ENCODE measurements at regions of chr15 and their contacts with region 1.

Region 1: DNA sequence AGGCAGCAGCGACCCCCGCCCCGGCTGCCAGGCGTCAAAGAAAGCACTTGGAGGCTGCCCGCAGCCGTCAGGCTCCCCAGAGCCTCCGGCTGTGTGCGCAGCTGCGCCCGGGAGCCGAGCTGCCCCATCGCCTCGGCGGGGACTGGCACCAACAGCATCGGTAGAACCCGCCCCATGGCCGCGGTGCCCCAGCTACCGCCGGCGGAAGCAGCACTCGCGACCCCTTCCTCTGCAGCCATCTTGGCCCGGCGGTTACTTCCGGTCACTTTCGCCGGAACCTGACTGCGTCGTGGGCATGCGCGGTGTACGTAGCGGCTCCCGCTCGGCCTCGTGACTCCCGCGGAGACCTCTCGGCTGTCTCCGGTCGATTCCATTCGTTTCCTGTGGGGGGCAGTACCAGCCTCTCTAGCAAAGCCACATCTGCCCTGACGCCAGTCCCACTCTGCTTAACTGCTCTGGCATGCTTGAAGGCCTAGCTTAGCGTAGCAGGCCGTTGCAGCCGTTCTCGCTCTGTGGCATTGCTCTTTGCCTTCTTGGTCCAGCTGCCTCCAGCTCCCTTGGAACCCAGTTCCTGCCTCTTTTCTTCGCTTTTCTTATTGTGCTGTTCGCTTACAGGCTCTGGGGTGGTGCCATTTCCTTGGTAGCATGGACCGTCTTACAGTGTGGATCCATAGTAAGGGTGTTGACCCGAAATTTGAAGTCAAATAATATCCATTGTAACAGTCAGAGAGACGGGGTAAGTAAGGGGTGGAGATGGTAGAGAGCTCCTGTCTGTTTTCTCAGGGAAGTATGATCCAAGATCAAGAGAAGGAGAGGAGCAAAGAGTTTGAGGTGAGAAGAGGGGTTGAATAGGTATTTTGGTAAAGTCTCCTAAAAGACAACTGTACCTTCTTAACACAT is at the start of gene SPG11:
- DNase-seq: peak; percentile 93

Region 2: GRCh38 chr15:44620081-44620480 is 43.6 kb before region 1 on chr15:
- CTCF ChIA-PET with region 1: no interaction called
- POLR2A ChIA-PET with region 1: no interaction called
- DNase-seq: no peak

Region 3: DNA sequence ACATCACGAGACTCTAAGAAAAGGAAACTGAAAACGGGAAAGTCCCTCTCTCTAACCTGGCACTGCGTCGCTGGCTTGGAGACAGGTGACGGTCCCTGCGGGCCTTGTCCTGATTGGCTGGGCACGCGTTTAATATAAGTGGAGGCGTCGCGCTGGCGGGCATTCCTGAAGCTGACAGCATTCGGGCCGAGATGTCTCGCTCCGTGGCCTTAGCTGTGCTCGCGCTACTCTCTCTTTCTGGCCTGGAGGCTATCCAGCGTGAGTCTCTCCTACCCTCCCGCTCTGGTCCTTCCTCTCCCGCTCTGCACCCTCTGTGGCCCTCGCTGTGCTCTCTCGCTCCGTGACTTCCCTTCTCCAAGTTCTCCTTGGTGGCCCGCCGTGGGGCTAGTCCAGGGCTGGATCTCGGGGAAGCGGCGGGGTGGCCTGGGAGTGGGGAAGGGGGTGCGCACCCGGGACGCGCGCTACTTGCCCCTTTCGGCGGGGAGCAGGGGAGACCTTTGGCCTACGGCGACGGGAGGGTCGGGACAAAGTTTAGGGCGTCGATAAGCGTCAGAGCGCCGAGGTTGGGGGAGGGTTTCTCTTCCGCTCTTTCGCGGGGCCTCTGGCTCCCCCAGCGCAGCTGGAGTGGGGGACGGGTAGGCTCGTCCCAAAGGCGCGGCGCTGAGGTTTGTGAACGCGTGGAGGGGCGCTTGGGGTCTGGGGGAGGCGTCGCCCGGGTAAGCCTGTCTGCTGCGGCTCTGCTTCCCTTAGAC is 47.9 kb after region 1 on chr15 and contains the start of gene B2M:
- CTCF ChIA-PET with region 1: interaction called, 5 read pairs
- POLR2A ChIA-PET with region 1: interaction called, 40 read pairs
- DNase-seq: peak; percentile 88

Region 4: DNA sequence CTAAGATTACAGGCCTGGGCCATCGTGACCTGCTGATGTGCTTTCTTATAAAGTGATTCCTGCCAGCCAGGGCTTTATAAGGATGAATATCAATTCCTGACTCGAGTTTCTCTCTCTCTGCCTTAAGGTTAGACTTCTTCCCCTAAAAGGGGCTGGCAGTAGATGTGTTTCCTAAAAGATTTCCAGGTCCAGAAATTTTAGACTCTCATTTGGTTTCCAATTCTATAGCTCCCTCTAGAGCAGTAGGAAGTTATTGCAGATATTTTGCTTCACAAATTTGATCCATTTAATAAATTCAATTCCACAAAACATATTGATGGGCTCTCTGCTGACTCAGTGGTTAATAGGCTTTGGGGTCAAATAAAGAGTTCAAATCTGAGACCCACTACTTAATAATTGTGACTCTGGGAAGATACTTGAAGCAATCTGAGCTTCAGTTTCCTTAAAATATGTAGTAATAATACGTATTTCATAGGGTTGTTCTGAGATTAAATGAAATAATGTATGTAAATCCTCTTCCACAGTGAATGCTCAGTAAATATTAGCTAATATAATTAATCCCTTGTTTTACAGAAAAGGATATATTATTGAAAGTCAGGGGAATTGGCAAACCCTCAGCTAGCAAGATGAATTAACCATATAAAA is 74.8 kb after region 1 on chr15:
- CTCF ChIA-PET with region 1: interaction called, 7 read pairs
- POLR2A ChIA-PET with region 1: interaction called, 33 read pairs
- DNase-seq: peak; percentile 28

Measured in HEK293T (cell line).